Activated CD4-positive, alpha-beta memory T cell treated with anti-CD3 and anti-CD28 coated beads for 36 hours (primary cell): ENCODE measurements at regions of chr17 and their contacts with region 1.

Region 1: GRCh38 chr17:73156166-73156840 is 8.5 kb upstream of the SSTR2 start:
- DNase-seq: peak; percentile 73
- H3K4me3 Mint-ChIP-seq: no peak overlapping the region
- H3K27ac Mint-ChIP-seq: no peak overlapping the region
- H3K4me1 Mint-ChIP-seq: peaks cover 19% of the 10 kb centered on the region
- H3K27me3 Mint-ChIP-seq: peaks cover 26% of the 10 kb centered on the region

Region 2: GRCh38 chr17:73103641-73104335 is 52.5 kb before region 1 on chr17:
- CTCF ChIA-PET with region 1: no interaction called
- POLR2A ChIA-PET with region 1: no interaction called
- intact Hi-C with region 1: no loop called
- DNase-seq: no peak
- H3K4me3 Mint-ChIP-seq: no peak overlapping the region
- H3K27ac Mint-ChIP-seq: no peak overlapping the region
- H3K4me1 Mint-ChIP-seq: no peaks in the 10 kb centered on the region
- H3K27me3 Mint-ChIP-seq: peaks cover 2% of the 10 kb centered on the region

Region 3: GRCh38 chr17:73166731-73167581 is 10.7 kb after region 1 on chr17:
- CTCF ChIA-PET with region 1: interaction called, 18 read pairs
- POLR2A ChIA-PET with region 1: no interaction called
- intact Hi-C with region 1: no loop called
- DNase-seq: peak; percentile 31
- H3K4me3 Mint-ChIP-seq: peak overlapping the region; percentile 64
- H3K27ac Mint-ChIP-seq: no peak overlapping the region
- H3K4me1 Mint-ChIP-seq: peaks cover 30% of the 10 kb centered on the region
- H3K27me3 Mint-ChIP-seq: peaks cover 66% of the 10 kb centered on the region